ENCODE measurements at regions of chr5 and their contacts with region 1.

Region 1: DNA sequence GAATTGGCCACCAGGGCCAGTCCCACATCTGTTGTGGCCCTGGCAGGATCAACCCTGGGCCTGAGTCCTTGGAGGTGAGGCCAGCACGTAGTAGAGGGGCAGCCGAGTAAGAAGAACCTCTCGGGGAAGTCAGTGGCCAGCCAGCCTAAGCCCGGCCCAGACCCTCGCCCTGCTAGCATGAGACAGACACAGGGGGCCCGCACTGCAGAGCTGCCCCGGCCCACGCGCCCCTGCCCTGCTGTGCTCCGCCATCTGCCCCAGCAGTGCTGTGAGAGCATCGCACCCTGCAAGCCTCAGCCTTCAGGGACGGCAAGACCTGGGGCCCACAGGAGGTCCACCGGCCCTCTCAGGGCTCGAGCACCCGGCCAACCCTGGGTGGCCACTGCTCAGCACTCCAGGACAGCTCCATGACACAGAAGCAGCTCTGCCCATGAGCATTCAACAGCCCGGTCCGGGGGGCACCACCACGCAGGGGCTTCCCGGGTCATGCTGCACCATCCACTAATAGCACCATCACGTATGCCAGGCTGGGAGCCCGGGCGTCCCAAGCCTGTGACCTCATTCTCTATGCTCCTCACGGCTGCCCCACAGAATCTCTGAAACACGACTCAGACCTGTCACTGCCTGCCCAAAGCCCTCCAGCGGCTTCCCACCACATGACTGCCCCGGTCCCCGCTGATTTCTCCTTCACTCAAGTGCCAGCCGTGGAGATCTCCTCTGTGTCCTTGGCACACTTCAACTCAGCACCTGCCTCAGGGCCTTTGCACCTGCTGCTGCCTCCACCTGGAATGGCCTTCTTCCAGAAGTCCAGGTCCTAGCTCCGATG is 38.1 kb downstream of the ADAMTS2 start:
- DNase-seq: no peak
- ATAC-seq: peak; percentile 14; the same call in 1 of the 2 replicates
- H3K4me3 ChIP-seq: no peak overlapping the region
- H3K27ac ChIP-seq: no peak overlapping the region
- H3K4me1 ChIP-seq: no peaks in the 10 kb centered on the region
- H3K27me3 ChIP-seq: peaks cover 6% of the 10 kb centered on the region
- CTCF ChIP-seq: no peak

Region 2: GRCh38 chr5:178590141-178590923 is 716.9 kb before region 1 on chr5 and contains the start of gene COL23A1:
- CTCF ChIA-PET with region 1: no interaction called
- POLR2A ChIA-PET with region 1: interaction called, 10 read pairs
- in situ Hi-C with region 1: no loop called
- intact Hi-C with region 1: no loop called
- DNase-seq: peak; percentile 15
- ATAC-seq: peak; percentile 67
- H3K4me3 ChIP-seq: peak within 1 kb of the TSS; percentile 32 to 37
- H3K27ac ChIP-seq: no peak within 1 kb of the TSS
- H3K4me1 ChIP-seq: peaks cover 6% of the 10 kb centered on the region; the same call in 1 of the 2 replicates
- H3K27me3 ChIP-seq: peaks cover 12% of the 10 kb centered on the region
- CTCF ChIP-seq: peak; percentile 95
- total RNA-seq, gene COL23A1: 0.05 TPM

Region 3: GRCh38 chr5:179187681-179188575 is 119.3 kb before region 1 on chr5:
- CTCF ChIA-PET with region 1: no interaction called
- POLR2A ChIA-PET with region 1: no interaction called
- in situ Hi-C with region 1: no loop called
- intact Hi-C with region 1: no loop called
- DNase-seq: no peak
- ATAC-seq: no peak
- H3K4me3 ChIP-seq: no peak overlapping the region
- H3K27ac ChIP-seq: no peak overlapping the region
- H3K4me1 ChIP-seq: no peaks in the 10 kb centered on the region
- H3K27me3 ChIP-seq: no peaks in the 10 kb centered on the region
- CTCF ChIP-seq: no peak

Region 4: GRCh38 chr5:180950291-180950949 is 1643.2 kb after region 1 on chr5:
- CTCF ChIA-PET with region 1: no interaction called
- POLR2A ChIA-PET with region 1: interaction called, 19 read pairs
- in situ Hi-C with region 1: no loop called
- intact Hi-C with region 1: no loop called
- DNase-seq: no peak
- ATAC-seq: no peak
- H3K4me3 ChIP-seq: no peak overlapping the region
- H3K27ac ChIP-seq: no peak overlapping the region
- H3K4me1 ChIP-seq: no peaks in the 10 kb centered on the region
- H3K27me3 ChIP-seq: no peaks in the 10 kb centered on the region
- CTCF ChIP-seq: no peak

Measured in Panc1 (cell line).